A673 (cell line): ENCODE measurements at regions of chr12 and their contacts with region 1.

Region 1: GRCh38 chr12:120971299-120972179 is 6.8 kb upstream of the HNF1A start:
- DNase-seq: peak; percentile 93
- H3K4me3 ChIP-seq: no peak overlapping the region
- H3K27ac ChIP-seq: no peak overlapping the region
- H3K4me1 ChIP-seq: peaks cover 8% of the 10 kb centered on the region
- H3K27me3 ChIP-seq: no peaks in the 10 kb centered on the region
- CTCF ChIP-seq: peak; percentile 90

Region 2: DNA sequence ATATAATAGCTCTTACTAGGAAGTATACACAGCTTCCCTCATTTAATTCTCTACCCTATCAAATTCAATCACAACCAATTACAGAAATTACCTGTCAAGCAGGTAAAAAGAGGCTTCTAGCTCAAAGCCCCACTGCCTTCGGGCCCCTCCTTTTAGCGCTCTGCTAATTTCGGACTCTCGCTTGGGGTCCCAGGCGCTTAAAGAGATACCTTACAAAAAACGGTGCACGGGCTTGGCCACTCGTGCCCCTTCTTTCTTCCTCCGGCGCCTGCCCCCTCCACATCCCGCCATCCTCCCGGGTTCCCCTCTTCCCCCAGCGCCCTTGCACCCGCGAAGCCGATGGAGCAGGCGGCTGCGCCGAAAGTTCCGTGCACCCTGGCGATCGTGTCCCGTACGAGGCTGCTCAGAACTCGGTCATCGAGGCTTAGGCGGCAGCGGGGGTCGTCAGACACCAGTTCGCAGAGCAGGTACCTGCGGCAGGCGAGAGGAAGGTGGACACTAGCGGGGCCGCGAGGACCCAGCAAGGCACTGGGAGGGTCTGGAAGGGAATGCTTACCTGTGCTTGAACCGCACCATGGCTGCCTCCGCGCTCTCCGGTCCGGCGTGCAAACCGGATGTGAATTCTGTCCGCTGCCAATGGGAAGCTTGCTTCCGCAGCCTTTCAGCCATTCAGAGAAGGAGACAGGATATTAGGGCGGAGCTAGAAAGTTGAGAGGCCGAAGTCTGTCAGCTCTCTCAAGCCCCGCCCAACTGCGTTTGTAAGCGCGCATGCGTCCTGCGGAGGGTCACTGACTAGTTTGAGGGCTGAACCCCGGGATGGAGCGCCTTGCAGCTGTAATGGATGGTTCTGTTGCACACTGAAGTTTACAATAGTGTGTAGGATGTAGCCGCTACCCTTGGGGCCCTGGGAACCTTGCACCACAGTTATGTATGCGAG is 390.5 kb before region 1 on chr12 and contains the start of gene POP5:
- CTCF ChIA-PET with region 1: interaction called, 5 read pairs
- POLR2A ChIA-PET with region 1: no interaction called
- intact Hi-C with region 1: loop called (anchors 2 kb)
- DNase-seq: peak; percentile 99
- H3K4me3 ChIP-seq: peak within 1 kb of the TSS; percentile 89
- H3K27ac ChIP-seq: peak within 1 kb of the TSS; percentile 59
- H3K4me1 ChIP-seq: peaks cover 10% of the 10 kb centered on the region
- H3K27me3 ChIP-seq: no peaks in the 10 kb centered on the region
- CTCF ChIP-seq: no peak
- total RNA-seq, gene POP5: 41.0 and 42.4 TPM in 2 replicates

Region 3: GRCh38 chr12:120725659-120726509 is 245.7 kb before region 1 on chr12 and contains the start of gene ACADS:
- CTCF ChIA-PET with region 1: no interaction called
- POLR2A ChIA-PET with region 1: no interaction called
- intact Hi-C with region 1: loop called (anchors 5 kb)
- DNase-seq: peak; percentile 91
- H3K4me3 ChIP-seq: peak within 1 kb of the TSS; percentile 51
- H3K27ac ChIP-seq: peak within 1 kb of the TSS; percentile 38
- H3K4me1 ChIP-seq: peaks cover 6% of the 10 kb centered on the region
- H3K27me3 ChIP-seq: no peaks in the 10 kb centered on the region
- CTCF ChIP-seq: no peak
- total RNA-seq, gene ACADS: 3.4 and 5.7 TPM in 2 replicates